Dorsolateral prefrontal cortex (tissue), 120 donors: ENCODE measurements at regions of chr16 and their contacts with region 1.

Region 1: DNA sequence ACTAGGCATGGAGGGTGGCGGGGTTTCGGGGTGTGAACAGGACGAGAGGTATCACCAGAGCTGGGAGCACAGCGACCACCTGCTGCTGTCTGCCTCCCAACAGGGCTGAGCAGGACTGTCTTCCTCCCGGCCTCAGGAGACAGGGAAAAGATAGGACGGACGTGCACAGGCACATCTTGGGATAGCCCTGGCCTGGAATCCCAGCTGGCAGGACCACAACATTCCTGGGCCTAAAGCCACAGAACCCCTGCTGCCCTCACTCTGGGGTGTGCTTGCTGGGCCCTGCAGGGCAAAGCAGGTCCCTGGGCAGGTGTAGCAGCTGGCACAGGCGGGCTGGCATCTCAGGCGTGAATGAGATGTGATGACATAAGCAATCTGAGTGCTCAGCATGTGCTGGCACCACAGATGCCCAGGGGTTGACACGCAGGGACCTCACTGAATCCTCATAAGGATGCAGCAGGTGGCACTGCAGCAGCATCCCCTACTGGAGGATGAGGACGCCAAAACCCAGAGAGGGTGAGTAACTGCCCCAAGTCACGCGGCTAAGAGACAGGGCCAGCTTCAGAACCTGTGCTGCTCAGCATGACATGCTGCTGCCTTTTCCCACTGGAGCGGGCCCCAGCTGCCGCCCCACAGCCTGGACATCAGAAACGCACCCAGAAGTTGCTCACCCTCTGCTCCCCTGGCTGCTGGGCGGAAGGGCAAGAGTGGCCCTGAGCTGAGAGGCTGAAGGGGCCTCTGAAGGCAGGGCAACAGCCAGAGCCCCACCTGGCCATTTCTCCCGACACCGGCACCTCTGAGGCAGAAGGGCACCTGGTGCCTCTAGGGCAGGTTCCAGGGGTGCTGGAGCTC is 7.1 kb downstream of the CORO7 start:
- DNase-seq: peak in 5 of 10 donors; percentile 48 to 70 (median 60)
- H3K4me3 ChIP-seq: no peak overlapping the region
- H3K27ac ChIP-seq: peak overlapping the region in 58 of 59 donors; percentile 51 to 99 (median 95)
- H3K27me3 ChIP-seq: no peaks in the 10 kb centered on the region
- CTCF ChIP-seq: peak in 31 of 56 donors; percentile 3 to 64 (median 34)

Region 2: GRCh38 chr16:4200000-4200780 is 209.1 kb before region 1 on chr16:
- intact Hi-C with region 1: no loop called
- DNase-seq: peak in 6 of 10 donors; percentile 26 to 61 (median 40)
- H3K4me3 ChIP-seq: no peak overlapping the region
- H3K27ac ChIP-seq: no peak overlapping the region
- H3K27me3 ChIP-seq: no peaks in the 10 kb centered on the region
- CTCF ChIP-seq: peak in 51 of 56 donors; percentile 14 to 64 (median 45)

Region 3: GRCh38 chr16:4271176-4272066 is 137.9 kb before region 1 on chr16:
- intact Hi-C with region 1: loop called (anchors 5 kb)
- DNase-seq: peak; percentile 94 to 98 (median 97)
- H3K4me3 ChIP-seq: peak overlapping the region; percentile 58 to 97 (median 88)
- H3K27ac ChIP-seq: peak overlapping the region in 58 of 59 donors; percentile 32 to 97 (median 93)
- H3K27me3 ChIP-seq: no peaks in the 10 kb centered on the region
- CTCF ChIP-seq: peak in 30 of 56 donors; percentile 1 to 54 (median 30)